ENCODE measurements at regions of chr2 and their contacts with region 1.

Region 1: GRCh38 chr2:129923265-129924091 is 56.0 kb upstream of the RAB6C start:
- DNase-seq: peak in 1 of 2 experiments; percentile 12
- H3K4me3 ChIP-seq: no peak overlapping the region
- H3K27ac ChIP-seq: no peak overlapping the region
- H3K4me1 ChIP-seq: no peaks in the 10 kb centered on the region
- H3K27me3 ChIP-seq: peaks cover 33% of the 10 kb centered on the region
- CTCF ChIP-seq: peak; percentile 67

Region 2: DNA sequence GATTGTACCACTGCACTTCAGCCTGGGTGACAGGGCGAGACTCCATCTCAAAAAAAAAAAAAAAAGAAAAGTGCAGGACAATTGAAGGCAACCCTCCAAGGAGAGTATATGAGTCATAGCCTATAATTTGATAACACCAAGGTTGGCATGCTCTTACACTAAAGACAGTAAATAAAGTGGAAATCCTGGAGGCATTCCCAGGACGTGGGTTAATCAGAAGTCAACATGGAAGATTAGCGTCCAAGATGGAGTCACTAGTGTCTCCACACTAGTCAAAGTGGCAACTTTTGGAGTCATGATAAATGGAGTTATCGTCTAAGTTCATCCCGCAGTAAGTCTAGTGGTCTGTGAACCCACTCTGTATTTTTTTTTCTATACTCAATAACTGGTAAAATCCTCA is 1853.7 kb before region 1 on chr2:
- CTCF ChIA-PET with region 1: no interaction called
- POLR2A ChIA-PET with region 1: no interaction called
- intact Hi-C with region 1: loop called (anchors 10 kb)
- DNase-seq: peak in 1 of 2 experiments; percentile 35
- H3K4me3 ChIP-seq: no peak overlapping the region
- H3K27ac ChIP-seq: no peak overlapping the region
- H3K4me1 ChIP-seq: no peaks in the 10 kb centered on the region
- H3K27me3 ChIP-seq: no peaks in the 10 kb centered on the region
- CTCF ChIP-seq: no peak

Region 3: DNA sequence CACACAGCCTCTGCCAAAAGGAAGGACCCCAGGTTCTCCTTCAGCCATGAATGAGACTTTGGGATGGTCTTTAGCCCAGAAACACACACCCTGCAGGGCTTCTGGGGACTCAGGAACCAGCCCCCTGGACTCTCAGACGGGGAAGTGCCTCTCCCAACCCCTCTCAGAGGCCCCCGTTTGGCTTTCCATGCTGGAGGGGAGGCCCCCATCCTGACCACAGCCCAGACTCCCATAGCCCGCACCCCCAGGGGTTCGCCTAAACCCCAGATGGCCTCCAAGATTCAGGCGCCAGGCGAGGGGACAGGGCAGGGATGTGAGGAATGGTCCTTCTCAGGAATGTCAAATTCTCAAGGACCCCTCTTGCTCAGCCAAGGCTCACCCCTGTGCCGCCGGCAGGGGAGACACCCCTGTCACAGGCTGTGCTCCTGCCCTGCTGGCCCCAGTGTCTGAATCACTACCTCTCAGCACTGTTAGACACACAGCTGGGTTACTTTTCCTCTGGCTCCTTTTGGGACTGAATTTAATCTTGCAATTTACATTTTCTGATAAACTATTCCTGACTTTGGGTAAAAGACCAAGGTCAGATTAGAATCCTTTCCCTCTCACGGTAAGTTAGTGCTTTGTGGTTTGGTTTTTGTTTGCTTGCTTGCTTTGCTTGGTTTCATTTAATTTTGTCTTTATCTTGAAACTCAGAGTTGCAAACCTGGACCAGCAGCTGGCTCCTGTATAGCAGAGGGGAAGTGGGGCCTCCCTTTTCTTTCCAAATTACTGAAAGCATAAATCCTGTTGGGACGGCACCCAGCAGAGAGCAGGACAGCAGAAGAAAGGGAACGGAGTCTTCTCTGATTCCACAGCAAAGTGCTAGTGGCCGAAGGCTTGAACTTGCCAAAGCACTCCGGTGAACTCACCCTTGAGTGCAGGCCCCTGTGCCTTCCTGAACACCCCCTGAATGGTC is 142.9 kb before region 1 on chr2:
- CTCF ChIA-PET with region 1: no interaction called
- POLR2A ChIA-PET with region 1: no interaction called
- intact Hi-C with region 1: no loop called
- DNase-seq: no peak
- H3K4me3 ChIP-seq: no peak overlapping the region
- H3K27ac ChIP-seq: no peak overlapping the region
- H3K4me1 ChIP-seq: no peaks in the 10 kb centered on the region
- H3K27me3 ChIP-seq: peaks cover 68% of the 10 kb centered on the region
- CTCF ChIP-seq: no peak

Region 4: DNA sequence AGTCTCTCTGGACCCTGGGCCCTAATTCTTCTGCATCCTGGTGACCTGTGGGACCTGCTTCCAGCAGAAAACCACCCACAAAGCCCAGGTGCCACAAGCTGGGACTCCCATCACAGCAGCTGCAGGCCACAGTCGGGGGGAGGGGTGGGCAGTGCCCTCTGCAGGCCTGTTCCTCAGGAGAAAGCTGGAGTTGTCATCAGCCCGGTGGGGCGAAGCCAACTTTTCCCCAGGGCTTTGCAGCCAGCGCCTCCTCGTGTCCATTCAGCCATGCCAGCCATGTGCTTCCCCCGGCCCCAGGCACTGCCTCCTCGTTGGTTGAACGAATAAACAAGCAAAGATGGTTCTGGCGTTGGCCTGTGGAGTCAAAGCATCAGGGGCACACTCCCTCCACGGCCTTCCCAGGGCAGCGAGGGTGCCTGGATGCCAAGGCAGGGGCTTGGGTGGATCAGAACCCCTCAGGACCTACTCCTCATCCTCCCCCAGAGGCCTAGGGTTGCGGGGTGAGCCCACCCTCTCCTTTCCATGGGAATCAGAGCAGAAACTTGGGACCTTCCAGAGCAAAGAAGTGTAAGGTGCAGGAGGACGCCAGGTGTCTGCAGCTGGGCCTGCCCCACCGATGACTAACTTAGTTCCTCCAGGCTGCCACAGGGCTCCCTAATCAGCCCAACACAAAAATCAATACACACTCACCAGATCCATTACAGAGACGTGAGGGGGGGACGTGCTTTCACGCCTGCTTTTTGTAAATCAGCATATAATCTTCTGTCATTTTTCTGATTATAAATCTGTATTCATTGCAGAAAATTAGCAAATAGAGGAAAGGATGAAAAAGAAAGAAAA is 19.7 kb before region 1 on chr2:
- CTCF ChIA-PET with region 1: interaction called, 17 read pairs
- POLR2A ChIA-PET with region 1: no interaction called
- intact Hi-C with region 1: no loop called
- DNase-seq: no peak
- H3K4me3 ChIP-seq: no peak overlapping the region
- H3K27ac ChIP-seq: no peak overlapping the region
- H3K4me1 ChIP-seq: no peaks in the 10 kb centered on the region
- H3K27me3 ChIP-seq: peaks cover 64% of the 10 kb centered on the region
- CTCF ChIP-seq: no peak

Measured in PC-9 (cell line).